ENCODE measurements at regions of chr10 and their contacts with region 1.

Region 1: DNA sequence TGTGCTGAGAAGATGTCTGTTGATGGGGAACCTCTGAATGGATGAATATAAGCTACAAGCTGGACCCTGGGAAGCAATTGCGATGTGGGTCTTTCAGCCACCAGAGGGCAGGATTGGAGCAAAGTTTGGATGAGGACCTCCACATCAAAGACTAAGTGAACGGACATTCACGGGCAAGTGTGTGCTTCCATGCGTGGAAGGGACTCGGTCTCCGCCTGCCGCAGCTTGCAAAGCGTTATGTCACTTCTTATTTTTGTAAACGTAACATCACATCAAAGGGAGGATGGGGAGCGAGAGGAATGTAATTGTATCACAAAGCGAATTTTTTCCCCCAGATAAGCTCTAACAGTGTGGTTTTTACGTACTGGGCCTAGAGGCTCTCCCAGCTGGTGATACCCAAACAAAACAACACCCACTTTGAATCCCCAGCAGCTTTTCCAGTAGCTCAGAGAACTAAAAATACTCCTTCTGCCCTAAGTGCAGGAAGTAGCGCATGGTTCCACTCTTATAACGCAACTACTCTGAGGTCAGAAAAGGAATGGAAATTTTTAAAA is 65.0 kb downstream of the VWA2 start:
- DNase-seq: peak; percentile 88
- ATAC-seq: peak; percentile 73
- H3K4me3 ChIP-seq: peak overlapping the region; percentile 3; the same call in 1 of the 2 replicates
- H3K27ac ChIP-seq: no peak overlapping the region
- H3K4me1 ChIP-seq: peaks cover 10% of the 10 kb centered on the region
- H3K27me3 ChIP-seq: peaks cover 9% of the 10 kb centered on the region
- CTCF ChIP-seq: peak; percentile 86
- POLR2A ChIP-seq: no peak
- RAD21 ChIP-seq: peak; percentile 81

Region 2: GRCh38 chr10:113704637-113705343 is 599.3 kb before region 1 on chr10:
- CTCF ChIA-PET with region 1: no interaction called
- POLR2A ChIA-PET with region 1: no interaction called
- dilution Hi-C with region 1: no loop called
- in situ Hi-C with region 1: no loop called
- intact Hi-C with region 1: loop called (anchors 5 kb)
- DNase-seq: peak; percentile 60
- ATAC-seq: peak; percentile 49
- H3K4me3 ChIP-seq: no peak overlapping the region
- H3K27ac ChIP-seq: no peak overlapping the region
- H3K4me1 ChIP-seq: peaks cover 9% of the 10 kb centered on the region
- H3K27me3 ChIP-seq: no peaks in the 10 kb centered on the region
- CTCF ChIP-seq: peak; percentile 69
- POLR2A ChIP-seq: no peak
- RAD21 ChIP-seq: peak; percentile 72

Region 3: GRCh38 chr10:114437456-114438292 is 133.6 kb after region 1 on chr10:
- CTCF ChIA-PET with region 1: interaction called, 17 read pairs
- POLR2A ChIA-PET with region 1: interaction called, 3 read pairs
- dilution Hi-C with region 1: no loop called
- in situ Hi-C with region 1: no loop called
- intact Hi-C with region 1: loop called (anchors 1 kb)
- DNase-seq: peak; percentile 19
- ATAC-seq: peak; percentile 72
- H3K4me3 ChIP-seq: no peak overlapping the region
- H3K27ac ChIP-seq: no peak overlapping the region
- H3K4me1 ChIP-seq: peaks cover 4% of the 10 kb centered on the region; the same call in 1 of the 2 replicates
- H3K27me3 ChIP-seq: no peaks in the 10 kb centered on the region
- CTCF ChIP-seq: peak; percentile 46
- POLR2A ChIP-seq: no peak
- RAD21 ChIP-seq: peak; percentile 38; the same call in 1 of the 2 replicates

Region 4: GRCh38 chr10:114541081-114541796 is 237.1 kb after region 1 on chr10:
- CTCF ChIA-PET with region 1: no interaction called
- POLR2A ChIA-PET with region 1: no interaction called
- dilution Hi-C with region 1: no loop called
- in situ Hi-C with region 1: loop called (anchors 5 kb)
- intact Hi-C with region 1: loop called (anchors 2 kb)
- DNase-seq: peak; percentile 91
- ATAC-seq: peak; percentile 87
- H3K4me3 ChIP-seq: no peak overlapping the region
- H3K27ac ChIP-seq: no peak overlapping the region
- H3K4me1 ChIP-seq: peaks cover 6% of the 10 kb centered on the region
- H3K27me3 ChIP-seq: peaks cover 39% of the 10 kb centered on the region
- CTCF ChIP-seq: no peak
- POLR2A ChIP-seq: no peak
- RAD21 ChIP-seq: no peak

Region 5: GRCh38 chr10:114600057-114600456 is 296.0 kb after region 1 on chr10:
- CTCF ChIA-PET with region 1: no interaction called
- POLR2A ChIA-PET with region 1: no interaction called
- dilution Hi-C with region 1: no loop called
- in situ Hi-C with region 1: no loop called
- intact Hi-C with region 1: no loop called
- DNase-seq: no peak
- ATAC-seq: no peak
- H3K4me3 ChIP-seq: no peak overlapping the region
- H3K27ac ChIP-seq: no peak overlapping the region
- H3K4me1 ChIP-seq: no peaks in the 10 kb centered on the region
- H3K27me3 ChIP-seq: peaks cover 4% of the 10 kb centered on the region; the same call in 1 of the 2 replicates
- CTCF ChIP-seq: no peak
- POLR2A ChIP-seq: no peak
- RAD21 ChIP-seq: no peak

Region 6: DNA sequence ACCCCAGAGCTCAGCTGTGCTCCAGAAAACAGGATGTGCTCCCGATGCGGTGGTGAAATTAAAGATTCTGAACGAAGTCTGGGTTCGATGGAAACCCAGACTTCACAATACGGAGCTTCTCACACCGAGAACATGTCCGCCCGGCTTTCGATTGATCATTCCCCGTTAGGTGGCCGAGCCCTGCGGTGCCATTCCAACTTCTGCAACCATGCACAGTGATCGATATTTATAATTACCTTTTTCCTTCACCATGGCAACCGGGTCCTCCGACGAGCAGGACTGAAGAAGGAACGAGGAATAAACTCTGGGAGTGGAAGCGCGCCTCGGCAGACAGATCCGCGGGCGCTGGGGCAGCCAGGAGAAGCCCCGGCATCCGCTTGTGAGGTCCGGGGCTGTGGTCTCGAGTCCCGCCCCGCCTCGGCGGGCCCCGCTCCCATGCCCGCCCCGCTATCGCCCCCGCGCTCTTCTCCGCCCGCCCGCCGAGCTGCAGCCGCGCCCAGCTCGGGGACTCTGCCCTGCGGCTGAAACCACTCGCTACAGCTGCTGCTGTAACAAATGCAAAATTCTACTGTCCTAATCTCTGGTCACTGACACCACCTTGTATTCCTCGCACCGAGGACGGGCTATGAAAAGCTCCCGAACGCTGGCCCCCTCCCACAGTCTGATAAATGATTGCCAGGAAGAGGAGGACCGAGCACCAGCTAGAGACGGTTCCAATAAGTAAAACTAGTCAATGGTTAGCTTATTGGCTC is 327.7 kb after region 1 on chr10:
- CTCF ChIA-PET with region 1: interaction called, 3 read pairs
- POLR2A ChIA-PET with region 1: no interaction called
- dilution Hi-C with region 1: no loop called
- in situ Hi-C with region 1: no loop called
- intact Hi-C with region 1: loop called (anchors 10 kb)
- DNase-seq: no peak
- ATAC-seq: peak; percentile 35
- H3K4me3 ChIP-seq: peak overlapping the region; percentile 66
- H3K27ac ChIP-seq: peak overlapping the region; percentile 3; the same call in 1 of the 2 replicates
- H3K4me1 ChIP-seq: peaks cover 13% of the 10 kb centered on the region
- H3K27me3 ChIP-seq: peaks cover 5% of the 10 kb centered on the region; the same call in 1 of the 2 replicates
- CTCF ChIP-seq: no peak
- POLR2A ChIP-seq: no peak
- RAD21 ChIP-seq: no peak

Region 7: DNA sequence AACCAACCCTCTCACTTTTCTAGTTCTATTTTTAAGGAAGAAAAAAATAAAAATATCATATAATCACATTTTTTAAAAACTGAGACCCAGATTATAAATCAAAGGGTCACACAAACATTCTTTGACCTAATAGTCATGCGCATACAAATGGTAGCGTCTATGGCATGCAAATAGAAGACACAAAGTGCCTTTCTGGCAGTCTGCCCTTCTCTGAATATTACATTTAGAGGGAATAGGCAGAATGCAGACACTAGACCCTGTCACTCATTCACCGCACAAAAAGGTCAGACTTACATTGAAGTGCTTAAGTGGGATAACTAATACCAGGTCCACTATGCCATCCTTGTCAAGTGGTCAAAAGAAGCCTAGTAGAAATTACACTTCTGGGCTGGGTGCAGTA is 490.9 kb after region 1 on chr10:
- CTCF ChIA-PET with region 1: no interaction called
- POLR2A ChIA-PET with region 1: no interaction called
- dilution Hi-C with region 1: no loop called
- in situ Hi-C with region 1: loop called (anchors 10 kb)
- intact Hi-C with region 1: no loop called
- DNase-seq: no peak
- ATAC-seq: no peak
- H3K4me3 ChIP-seq: no peak overlapping the region
- H3K27ac ChIP-seq: no peak overlapping the region
- H3K4me1 ChIP-seq: no peaks in the 10 kb centered on the region
- H3K27me3 ChIP-seq: no peaks in the 10 kb centered on the region
- CTCF ChIP-seq: no peak
- POLR2A ChIP-seq: no peak
- RAD21 ChIP-seq: no peak

Region 8: DNA sequence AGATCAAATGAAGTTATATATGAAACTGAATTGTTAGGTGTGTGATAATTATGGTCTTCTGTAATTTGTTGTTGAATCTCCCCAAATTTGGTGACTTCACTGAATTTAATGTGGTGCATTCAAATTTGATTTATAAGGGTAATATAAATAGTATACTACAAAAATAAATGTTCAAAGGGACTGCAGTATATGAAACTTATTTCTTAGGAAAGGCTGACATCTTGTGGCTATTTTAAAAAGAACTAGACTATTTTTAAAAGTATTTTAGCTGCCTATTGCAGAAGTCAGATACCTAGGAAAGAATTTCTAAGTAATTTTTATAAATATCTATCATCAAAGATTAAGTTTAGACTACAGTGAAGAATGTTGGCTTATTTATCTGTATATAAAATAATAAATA is 825.7 kb after region 1 on chr10:
- CTCF ChIA-PET with region 1: no interaction called
- POLR2A ChIA-PET with region 1: no interaction called
- dilution Hi-C with region 1: no loop called
- in situ Hi-C with region 1: loop called (anchors 10 kb)
- intact Hi-C with region 1: loop called (anchors 5 kb)
- DNase-seq: peak; percentile 37
- ATAC-seq: peak; percentile 46
- H3K4me3 ChIP-seq: no peak overlapping the region
- H3K27ac ChIP-seq: no peak overlapping the region
- H3K4me1 ChIP-seq: no peaks in the 10 kb centered on the region
- H3K27me3 ChIP-seq: no peaks in the 10 kb centered on the region
- CTCF ChIP-seq: peak; percentile 56
- POLR2A ChIP-seq: no peak
- RAD21 ChIP-seq: peak; percentile 67

Measured in IMR-90 (cell line).